ENCODE measurements at regions of chr17 and their contacts with region 1.

Region 1: GRCh38 chr17:32609085-32609484 is 122.3 kb downstream of the CDK5R1 start:
- DNase-seq: peak; percentile 63
- CTCF ChIP-seq: peak; percentile 73

Region 2: DNA sequence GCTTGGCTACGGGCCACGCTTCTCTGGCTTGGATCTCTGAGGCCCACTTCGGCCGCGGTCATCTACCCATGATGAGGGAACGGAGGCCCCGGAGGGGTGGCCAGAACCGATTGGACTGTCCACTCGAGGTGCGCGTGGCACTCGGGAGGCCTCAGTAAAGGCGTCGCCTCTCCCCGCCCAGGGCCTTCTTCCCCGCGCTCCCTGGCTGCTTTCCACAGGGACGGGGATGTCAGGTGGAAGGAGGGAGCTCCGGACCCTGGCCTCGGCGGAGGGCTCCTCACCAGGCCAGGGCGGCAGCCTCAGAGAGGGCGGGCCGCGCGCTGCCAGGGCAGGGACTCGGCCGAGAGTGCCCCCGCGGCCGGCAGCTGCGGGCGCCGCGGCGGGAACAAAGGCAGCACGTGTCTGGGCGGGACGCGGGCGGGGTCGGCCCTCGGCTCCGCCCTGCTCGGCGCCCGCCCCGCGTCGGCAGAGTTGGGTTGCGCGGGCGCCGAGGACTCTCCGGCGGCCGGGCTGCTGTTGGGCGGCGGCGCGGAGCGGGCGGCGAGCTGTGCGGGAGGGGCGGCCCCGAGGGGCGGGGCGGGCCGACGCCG is 122.9 kb before region 1 on chr17:
- in situ Hi-C with region 1: loop called (anchors 25 kb)
- DNase-seq: peak; percentile 94
- CTCF ChIP-seq: no peak

Region 3: GRCh38 chr17:32659419-32659842 is 50.3 kb after region 1 on chr17:
- in situ Hi-C with region 1: no loop called
- DNase-seq: peak; percentile 80
- CTCF ChIP-seq: peak; percentile 85

Measured in GM13977 (cell line).